Activated naive CD8-positive, alpha-beta T cell treated with anti-CD3 and anti-CD28 coated beads, Interleukin-2, amount 10 ng/mL, durations not matched to agents 7 days and 5 days (primary cell): ENCODE measurements at regions of chr1 and their contacts with region 1.

Region 1: GRCh38 chr1:155172732-155173477 is at the start of gene KRTCAP2:
- DNase-seq: peak; percentile 95
- ATAC-seq: peak; percentile 79
- H3K4me3 Mint-ChIP-seq: peak within 1 kb of the TSS; percentile 96
- H3K27ac Mint-ChIP-seq: peak within 1 kb of the TSS; percentile 97
- H3K4me1 Mint-ChIP-seq: peaks cover 31% of the 10 kb centered on the region
- H3K27me3 Mint-ChIP-seq: no peaks in the 10 kb centered on the region
- total RNA-seq, gene KRTCAP2: 146 to 170 TPM

Region 2: DNA sequence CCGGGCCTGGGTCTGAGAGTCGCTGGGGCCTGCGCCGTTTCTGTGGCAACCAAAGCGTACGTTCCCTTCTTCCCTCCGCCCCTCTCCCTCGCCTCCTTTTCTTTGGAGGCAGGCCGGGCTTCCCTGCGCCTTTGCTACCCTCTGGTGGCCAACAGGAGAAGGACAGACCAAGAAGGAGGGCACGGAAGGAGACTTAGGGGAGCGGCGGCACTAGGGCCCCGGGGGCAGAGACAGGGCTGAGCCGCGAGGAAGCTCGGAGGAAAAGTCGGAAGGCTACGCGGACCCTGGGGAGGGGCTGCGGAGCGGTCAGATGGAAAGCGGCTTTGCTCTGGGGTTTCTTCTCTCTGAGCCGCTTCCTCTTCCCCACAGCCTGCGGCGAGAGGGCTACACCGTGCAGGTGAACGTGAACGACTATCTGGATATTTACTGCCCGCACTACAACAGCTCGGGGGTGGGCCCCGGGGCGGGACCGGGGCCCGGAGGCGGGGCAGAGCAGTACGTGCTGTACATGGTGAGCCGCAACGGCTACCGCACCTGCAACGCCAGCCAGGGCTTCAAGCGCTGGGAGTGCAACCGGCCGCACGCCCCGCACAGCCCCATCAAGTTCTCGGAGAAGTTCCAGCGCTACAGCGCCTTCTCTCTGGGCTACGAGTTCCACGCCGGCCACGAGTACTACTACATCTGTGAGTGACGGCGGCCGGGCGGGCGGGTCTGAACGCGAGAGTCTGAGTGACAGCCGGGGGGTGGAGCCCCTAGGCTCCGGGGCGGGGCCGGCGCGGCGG is 88.0 kb before region 1 on chr1:
- POLR2A ChIA-PET with region 1: interaction called, 21 read pairs
- DNase-seq: peak; percentile 97
- ATAC-seq: peak; percentile 85
- H3K4me3 Mint-ChIP-seq: peak overlapping the region; percentile 97
- H3K27ac Mint-ChIP-seq: peak overlapping the region; percentile 98
- H3K4me1 Mint-ChIP-seq: peaks cover 29% of the 10 kb centered on the region
- H3K27me3 Mint-ChIP-seq: peaks cover 36% of the 10 kb centered on the region

Region 3: GRCh38 chr1:155193275-155193990 is 20.5 kb after region 1 on chr1:
- POLR2A ChIA-PET with region 1: interaction called, 78 read pairs
- DNase-seq: peak; percentile 84
- ATAC-seq: peak; percentile 51
- H3K4me3 Mint-ChIP-seq: peak overlapping the region; percentile 92
- H3K27ac Mint-ChIP-seq: peak overlapping the region; percentile 97
- H3K4me1 Mint-ChIP-seq: peaks cover 27% of the 10 kb centered on the region
- H3K27me3 Mint-ChIP-seq: no peaks in the 10 kb centered on the region

Region 4: GRCh38 chr1:155208541-155209311 is 35.8 kb after region 1 on chr1 and contains the start of gene MTX1:
- POLR2A ChIA-PET with region 1: interaction called, 31 read pairs
- DNase-seq: peak; percentile 89
- ATAC-seq: peak; percentile 74
- H3K4me3 Mint-ChIP-seq: peak within 1 kb of the TSS; percentile 90
- H3K27ac Mint-ChIP-seq: peak within 1 kb of the TSS; percentile 90
- H3K4me1 Mint-ChIP-seq: peaks cover 25% of the 10 kb centered on the region
- H3K27me3 Mint-ChIP-seq: no peaks in the 10 kb centered on the region
- total RNA-seq, gene MTX1: 31.5 to 31.7 TPM

Region 5: DNA sequence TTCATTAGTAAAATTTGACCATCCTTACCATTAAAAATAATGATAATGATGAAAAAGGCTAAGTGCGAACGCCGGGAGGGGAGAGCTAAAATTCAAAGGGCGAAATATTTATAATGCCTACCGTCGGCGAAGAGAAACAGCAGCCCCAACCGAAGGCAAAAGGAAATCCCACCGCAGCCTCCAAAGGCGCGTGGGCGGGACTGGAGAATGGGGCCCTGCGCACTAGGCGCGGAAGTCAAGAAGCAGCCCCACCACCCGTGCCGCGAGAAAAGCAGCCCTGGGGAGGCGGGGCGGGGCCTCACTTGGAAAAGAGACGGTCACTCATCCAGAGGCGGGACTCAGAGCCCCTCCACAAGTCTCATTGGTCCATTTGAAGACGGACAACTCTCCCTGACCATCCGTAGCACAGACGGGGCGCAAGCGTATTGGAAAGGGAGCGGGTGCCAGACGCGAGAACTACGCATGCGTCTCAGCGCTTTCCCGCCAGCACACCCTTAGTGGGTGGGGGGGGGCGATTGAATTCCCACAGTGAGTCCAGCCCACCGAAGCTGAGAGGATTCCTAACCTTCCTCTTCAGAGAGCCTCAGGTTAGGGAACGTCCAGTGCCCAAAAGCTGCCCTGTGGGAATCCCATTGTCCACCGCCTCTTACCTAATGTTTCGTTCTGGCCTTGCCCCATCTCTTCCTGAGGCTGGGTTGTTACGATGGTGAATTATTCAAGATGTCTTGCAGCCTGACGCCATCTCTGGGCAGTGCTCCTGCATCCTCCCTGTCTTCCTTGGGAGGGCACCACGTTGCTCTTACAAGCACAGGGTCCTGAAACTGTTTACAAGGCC is 54.6 kb after region 1 on chr1:
- POLR2A ChIA-PET with region 1: interaction called, 26 read pairs
- DNase-seq: peak; percentile 96
- ATAC-seq: peak; percentile 96
- H3K4me3 Mint-ChIP-seq: peak overlapping the region; percentile 95
- H3K27ac Mint-ChIP-seq: peak overlapping the region; percentile 92
- H3K4me1 Mint-ChIP-seq: peaks cover 24% of the 10 kb centered on the region
- H3K27me3 Mint-ChIP-seq: no peaks in the 10 kb centered on the region

Region 6: DNA sequence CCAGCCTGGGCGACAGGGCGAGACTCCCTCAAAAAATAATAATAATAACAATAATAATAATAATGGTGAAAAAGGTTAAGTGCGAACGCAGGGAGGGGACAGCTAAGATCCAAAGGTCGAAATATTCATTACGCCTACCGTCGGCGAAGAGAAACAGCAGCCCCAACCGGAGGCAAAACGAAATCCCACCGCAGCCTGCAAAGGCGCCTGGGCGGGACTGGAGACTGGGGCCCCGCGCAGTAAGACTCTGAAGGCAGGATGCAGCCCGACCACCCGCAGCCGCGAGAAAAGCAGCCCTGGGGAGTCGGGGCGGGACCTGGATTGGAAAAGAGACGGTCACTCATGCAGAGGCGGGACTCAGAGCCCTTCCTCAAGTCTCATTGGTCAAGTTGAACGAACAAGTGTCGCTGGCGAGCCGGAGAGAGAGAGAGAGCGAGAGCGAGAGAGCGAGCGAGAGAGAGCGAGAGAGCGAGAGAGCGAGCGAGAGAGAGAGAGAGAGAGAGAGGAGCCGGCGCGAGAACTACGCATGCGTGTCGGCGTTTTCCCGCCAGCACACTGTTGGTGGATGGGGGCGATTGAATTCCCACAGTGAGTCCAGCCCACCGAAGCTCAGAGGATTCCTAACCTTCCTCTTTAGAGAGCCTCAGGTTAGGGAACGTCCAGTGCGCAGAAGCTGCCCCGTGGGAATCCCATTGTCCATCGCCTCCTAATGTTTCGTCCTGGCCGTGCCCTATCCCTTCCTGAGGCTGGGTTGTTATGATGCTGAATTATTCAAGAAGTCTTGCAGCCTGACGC is 71.7 kb after region 1 on chr1:
- POLR2A ChIA-PET with region 1: interaction called, 13 read pairs
- DNase-seq: peak; percentile 96
- ATAC-seq: peak; percentile 97
- H3K4me3 Mint-ChIP-seq: peak overlapping the region; percentile 85
- H3K27ac Mint-ChIP-seq: peak overlapping the region; percentile 95
- H3K4me1 Mint-ChIP-seq: peaks cover 49% of the 10 kb centered on the region
- H3K27me3 Mint-ChIP-seq: no peaks in the 10 kb centered on the region

Region 7: GRCh38 chr1:155316922-155317321 is 144.0 kb after region 1 on chr1:
- POLR2A ChIA-PET with region 1: no interaction called
- DNase-seq: no peak
- ATAC-seq: no peak
- H3K4me3 Mint-ChIP-seq: no peak overlapping the region
- H3K27ac Mint-ChIP-seq: no peak overlapping the region
- H3K4me1 Mint-ChIP-seq: peaks cover 41% of the 10 kb centered on the region
- H3K27me3 Mint-ChIP-seq: no peaks in the 10 kb centered on the region